Activated CD8-positive, alpha-beta memory T cell treated with anti-CD3 and anti-CD28 coated beads, Interleukin-2, amount 10 ng/mL, durations not matched to agents 7 days and 5 days (primary cell): ENCODE measurements at regions of chr19 and their contacts with region 1.

Region 1: GRCh38 chr19:2168619-2169424 is 5.1 kb downstream of the DOT1L start:
- DNase-seq: peak; percentile 77
- ATAC-seq: peak; percentile 5
- H3K4me3 Mint-ChIP-seq: peak overlapping the region; percentile 65
- H3K27ac Mint-ChIP-seq: peak overlapping the region; percentile 78
- H3K4me1 Mint-ChIP-seq: peaks cover 61% of the 10 kb centered on the region
- H3K27me3 Mint-ChIP-seq: no peaks in the 10 kb centered on the region

Region 2: GRCh38 chr19:2151339-2152229 is 17.2 kb before region 1 on chr19 and contains the start of gene AP3D1:
- CTCF ChIA-PET with region 1: interaction called, 14 read pairs
- DNase-seq: peak; percentile 100
- ATAC-seq: peak; percentile 90
- H3K4me3 Mint-ChIP-seq: peak within 1 kb of the TSS; percentile 80
- H3K27ac Mint-ChIP-seq: peak within 1 kb of the TSS; percentile 78
- H3K4me1 Mint-ChIP-seq: peaks cover 46% of the 10 kb centered on the region
- H3K27me3 Mint-ChIP-seq: no peaks in the 10 kb centered on the region
- total RNA-seq, gene AP3D1: 110 to 127 TPM